Activated CD4-positive, alpha-beta T cell treated with anti-CD3 and anti-CD28 coated beads for 36 hours (primary cell): ENCODE measurements at regions of chr15 and their contacts with region 1.

Region 1: DNA sequence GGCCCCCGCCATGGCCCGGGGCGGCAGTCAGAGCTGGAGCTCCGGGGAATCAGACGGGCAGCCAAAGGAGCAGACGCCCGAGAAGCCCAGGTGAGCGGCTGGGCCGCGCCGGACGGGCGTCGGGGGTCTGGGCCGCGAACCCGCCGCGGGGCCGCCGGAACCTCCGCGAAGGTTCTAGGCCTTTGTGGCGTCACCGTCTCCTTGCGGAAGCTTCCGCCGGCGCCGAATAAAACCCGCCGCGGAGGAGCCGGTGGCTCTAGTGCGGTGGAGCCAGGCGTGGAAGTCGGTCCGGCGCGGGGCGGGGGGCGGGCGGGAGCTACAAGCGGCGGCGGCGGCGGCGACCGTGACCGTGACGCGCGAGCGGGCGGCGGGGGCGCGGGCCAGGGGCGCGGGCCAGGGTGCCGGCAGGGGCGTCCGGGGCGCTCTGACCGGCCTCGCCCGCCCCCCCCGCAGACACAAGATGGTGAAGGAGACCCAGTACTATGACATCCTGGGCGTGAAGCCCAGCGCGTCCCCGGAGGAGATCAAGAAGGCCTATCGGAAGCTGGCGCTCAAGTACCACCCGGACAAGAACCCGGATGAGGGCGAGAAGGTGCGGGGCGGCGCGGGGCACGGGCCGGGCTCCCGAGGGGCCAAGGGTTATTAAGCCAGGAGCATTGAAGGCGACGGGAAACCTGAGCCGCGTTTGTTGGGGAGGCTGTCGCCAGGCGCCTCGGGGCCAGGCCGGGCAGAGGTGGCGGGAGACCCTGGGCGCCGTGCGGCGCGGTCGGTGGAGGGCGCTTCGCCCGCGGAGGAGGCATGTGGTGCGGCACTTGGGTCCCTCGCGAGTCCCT is at the start of gene DNAJA4:
- DNase-seq: peak; percentile 74
- ATAC-seq: peak; percentile 66
- H3K4me3 Mint-ChIP-seq: peak within 1 kb of the TSS; percentile 83
- H3K27ac Mint-ChIP-seq: peak within 1 kb of the TSS; percentile 86
- H3K4me1 Mint-ChIP-seq: peaks cover 29% of the 10 kb centered on the region
- H3K27me3 Mint-ChIP-seq: no peaks in the 10 kb centered on the region
- total RNA-seq, gene DNAJA4: 38.6 to 41.5 TPM

Region 2: DNA sequence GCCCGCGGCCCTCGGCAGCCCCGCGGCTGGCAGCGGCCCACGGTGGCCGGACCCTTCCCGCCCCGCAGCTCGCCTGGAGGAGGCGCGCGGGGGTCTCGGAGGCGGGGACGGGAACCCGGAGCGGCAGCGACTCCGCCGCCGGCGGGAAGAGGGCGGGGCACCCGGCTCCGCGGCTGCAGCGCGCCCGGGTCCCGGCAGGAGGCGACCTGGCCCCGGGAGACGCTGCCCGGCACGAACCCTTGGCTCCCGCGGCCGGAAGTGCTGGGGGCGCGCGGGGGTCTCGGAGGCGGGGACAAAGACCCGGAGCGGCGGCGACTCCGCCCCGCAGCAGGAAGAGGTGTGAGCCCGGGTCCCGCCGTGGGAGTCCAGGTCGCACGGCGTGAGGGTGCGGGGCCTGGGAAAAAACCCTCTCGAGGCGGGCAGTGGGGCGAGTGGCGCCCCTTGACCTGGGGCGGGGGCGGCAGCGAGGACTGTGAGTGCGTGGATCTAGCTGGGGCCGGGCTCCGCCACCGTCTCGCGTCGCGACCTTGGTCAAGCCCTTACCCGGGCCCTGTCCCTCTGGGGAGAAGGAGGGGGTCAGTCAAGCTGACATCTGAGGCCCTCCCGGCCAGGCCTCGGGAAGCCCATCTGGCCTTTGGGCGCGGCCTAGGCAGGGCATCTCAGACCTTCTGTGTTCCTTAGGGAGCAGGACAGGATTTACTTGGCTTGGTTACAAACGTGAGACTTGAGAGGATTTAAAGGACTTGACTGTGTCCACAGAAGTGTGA is 133.0 kb before region 1 on chr15 and contains the start of gene CIB2:
- CTCF ChIA-PET with region 1: interaction called, 7 read pairs
- POLR2A ChIA-PET with region 1: no interaction called
- intact Hi-C with region 1: loop called in 1 of 2 experiments (anchors 1 kb)
- DNase-seq: peak; percentile 86
- ATAC-seq: peak; percentile 87
- H3K4me3 Mint-ChIP-seq: peak within 1 kb of the TSS; percentile 82
- H3K27ac Mint-ChIP-seq: peak within 1 kb of the TSS; percentile 88
- H3K4me1 Mint-ChIP-seq: peaks cover 20% of the 10 kb centered on the region
- H3K27me3 Mint-ChIP-seq: no peaks in the 10 kb centered on the region
- total RNA-seq, gene CIB2: 0.91 to 1.2 TPM

Region 3: GRCh38 chr15:78276064-78276943 is 11.8 kb after region 1 on chr15:
- CTCF ChIA-PET with region 1: interaction called, 10 read pairs
- POLR2A ChIA-PET with region 1: no interaction called
- intact Hi-C with region 1: no loop called
- DNase-seq: no peak
- ATAC-seq: no peak
- H3K4me3 Mint-ChIP-seq: no peak overlapping the region
- H3K27ac Mint-ChIP-seq: no peak overlapping the region
- H3K4me1 Mint-ChIP-seq: no peaks in the 10 kb centered on the region
- H3K27me3 Mint-ChIP-seq: no peaks in the 10 kb centered on the region

Region 4: GRCh38 chr15:78299101-78299930 is 34.8 kb after region 1 on chr15 and contains the start of gene SKIC8:
- CTCF ChIA-PET with region 1: interaction called, 8 read pairs
- POLR2A ChIA-PET with region 1: interaction called, 6 read pairs
- intact Hi-C with region 1: loop called in 1 of 2 experiments (anchors 1 kb)
- DNase-seq: peak; percentile 95
- ATAC-seq: peak; percentile 96
- H3K4me3 Mint-ChIP-seq: peak within 1 kb of the TSS; percentile 96
- H3K27ac Mint-ChIP-seq: peak within 1 kb of the TSS; percentile 91
- H3K4me1 Mint-ChIP-seq: peaks cover 29% of the 10 kb centered on the region
- H3K27me3 Mint-ChIP-seq: no peaks in the 10 kb centered on the region
- total RNA-seq, gene SKIC8: 39.2 to 52.6 TPM

Region 5: GRCh38 chr15:78315686-78316282 is 51.3 kb after region 1 on chr15:
- CTCF ChIA-PET with region 1: no interaction called
- POLR2A ChIA-PET with region 1: no interaction called
- intact Hi-C with region 1: no loop called
- DNase-seq: peak; percentile 22
- ATAC-seq: no peak
- H3K4me3 Mint-ChIP-seq: no peak overlapping the region
- H3K27ac Mint-ChIP-seq: no peak overlapping the region
- H3K4me1 Mint-ChIP-seq: no peaks in the 10 kb centered on the region
- H3K27me3 Mint-ChIP-seq: no peaks in the 10 kb centered on the region